ENCODE measurements at regions of chr16 and their contacts with region 1.

Region 1: GRCh38 chr16:56608043-56608875 is at the start of gene MT2A:
- DNase-seq: peak; percentile 97
- ATAC-seq: peak; percentile 66
- H3K4me3 Mint-ChIP-seq: peak within 1 kb of the TSS; percentile 97
- H3K27ac Mint-ChIP-seq: peak within 1 kb of the TSS; percentile 98
- H3K4me1 Mint-ChIP-seq: peaks cover 56% of the 10 kb centered on the region
- H3K27me3 Mint-ChIP-seq: no peaks in the 10 kb centered on the region
- total RNA-seq, gene MT2A: 114 to 380 TPM

Region 2: GRCh38 chr16:56203052-56203451 is 405.2 kb before region 1 on chr16:
- CTCF ChIA-PET with region 1: no interaction called
- POLR2A ChIA-PET with region 1: no interaction called
- intact Hi-C with region 1: loop called in 1 of 2 experiments (anchors 5 kb)
- DNase-seq: peak; percentile 82
- ATAC-seq: peak; percentile 85
- H3K4me3 Mint-ChIP-seq: no peak overlapping the region
- H3K27ac Mint-ChIP-seq: no peak overlapping the region
- H3K4me1 Mint-ChIP-seq: peaks cover 23% of the 10 kb centered on the region
- H3K27me3 Mint-ChIP-seq: peaks cover 3% of the 10 kb centered on the region

Region 3: GRCh38 chr16:56625140-56625942 is 17.1 kb after region 1 on chr16 and contains the start of gene MT1E:
- CTCF ChIA-PET with region 1: interaction called, 9 read pairs
- POLR2A ChIA-PET with region 1: interaction called, 31 read pairs
- intact Hi-C with region 1: loop called (anchors 1 kb)
- DNase-seq: peak; percentile 82
- ATAC-seq: peak; percentile 88
- H3K4me3 Mint-ChIP-seq: peak within 1 kb of the TSS; percentile 71
- H3K27ac Mint-ChIP-seq: peak within 1 kb of the TSS; percentile 79
- H3K4me1 Mint-ChIP-seq: peaks cover 14% of the 10 kb centered on the region
- H3K27me3 Mint-ChIP-seq: peaks cover 26% of the 10 kb centered on the region
- total RNA-seq, gene MT1E: 61.1 to 108 TPM

Region 4: GRCh38 chr16:56681939-56682702 is 73.9 kb after region 1 on chr16 and contains the start of gene MT1X:
- CTCF ChIA-PET with region 1: interaction called, 9 read pairs
- POLR2A ChIA-PET with region 1: interaction called, 7 read pairs
- intact Hi-C with region 1: loop called (anchors 1 kb)
- DNase-seq: peak; percentile 96
- ATAC-seq: peak; percentile 96
- H3K4me3 Mint-ChIP-seq: peak within 1 kb of the TSS; percentile 89
- H3K27ac Mint-ChIP-seq: peak within 1 kb of the TSS; percentile 97
- H3K4me1 Mint-ChIP-seq: peaks cover 22% of the 10 kb centered on the region
- H3K27me3 Mint-ChIP-seq: no peaks in the 10 kb centered on the region
- total RNA-seq, gene MT1X: 46.8 to 59.3 TPM

Region 5: GRCh38 chr16:56938422-56939156 is 330.3 kb after region 1 on chr16:
- CTCF ChIA-PET with region 1: no interaction called
- POLR2A ChIA-PET with region 1: no interaction called
- intact Hi-C with region 1: loop called (anchors 2 to 5 kb)
- DNase-seq: peak; percentile 78
- ATAC-seq: peak; percentile 81
- H3K4me3 Mint-ChIP-seq: peak overlapping the region; percentile 70
- H3K27ac Mint-ChIP-seq: peak overlapping the region; percentile 95
- H3K4me1 Mint-ChIP-seq: peaks cover 90% of the 10 kb centered on the region
- H3K27me3 Mint-ChIP-seq: no peaks in the 10 kb centered on the region

Region 6: DNA sequence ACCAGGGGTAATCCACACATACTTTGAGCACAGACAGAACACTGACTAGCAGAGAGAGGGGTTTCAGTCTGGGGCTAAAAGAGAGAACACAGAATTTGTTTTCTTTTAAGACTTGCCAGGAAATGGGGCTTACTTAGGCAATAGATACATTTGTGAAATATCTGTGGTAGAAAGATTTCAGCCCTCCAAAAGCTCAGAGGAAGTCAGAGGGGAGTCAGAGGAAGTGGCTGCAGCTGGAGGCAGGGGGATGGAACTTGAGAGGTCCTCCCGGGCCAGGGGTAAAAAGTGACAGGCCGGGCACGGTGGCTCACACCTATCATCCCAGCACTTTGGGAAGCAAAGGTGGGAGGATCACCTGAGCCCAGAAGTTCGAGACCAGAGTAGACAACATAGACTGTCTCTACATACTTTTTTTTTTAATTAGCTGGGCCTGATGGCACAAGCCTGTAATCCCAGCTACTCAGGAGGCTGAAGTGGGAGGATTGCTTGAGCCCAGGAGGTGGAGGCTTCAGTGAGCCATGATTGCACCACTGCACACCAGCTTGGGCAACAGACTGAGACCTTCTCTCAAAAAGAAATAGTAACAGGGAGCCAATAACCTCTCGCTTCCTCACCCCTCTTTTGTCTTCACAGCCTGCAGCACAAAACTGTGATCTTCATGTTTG is 431.0 kb after region 1 on chr16:
- CTCF ChIA-PET with region 1: no interaction called
- POLR2A ChIA-PET with region 1: no interaction called
- intact Hi-C with region 1: loop called in 1 of 2 experiments (anchors 1 kb)
- DNase-seq: peak; percentile 60
- ATAC-seq: peak; percentile 9
- H3K4me3 Mint-ChIP-seq: peak overlapping the region; percentile 2
- H3K27ac Mint-ChIP-seq: peak overlapping the region; percentile 97
- H3K4me1 Mint-ChIP-seq: peaks cover 89% of the 10 kb centered on the region
- H3K27me3 Mint-ChIP-seq: no peaks in the 10 kb centered on the region

Region 7: DNA sequence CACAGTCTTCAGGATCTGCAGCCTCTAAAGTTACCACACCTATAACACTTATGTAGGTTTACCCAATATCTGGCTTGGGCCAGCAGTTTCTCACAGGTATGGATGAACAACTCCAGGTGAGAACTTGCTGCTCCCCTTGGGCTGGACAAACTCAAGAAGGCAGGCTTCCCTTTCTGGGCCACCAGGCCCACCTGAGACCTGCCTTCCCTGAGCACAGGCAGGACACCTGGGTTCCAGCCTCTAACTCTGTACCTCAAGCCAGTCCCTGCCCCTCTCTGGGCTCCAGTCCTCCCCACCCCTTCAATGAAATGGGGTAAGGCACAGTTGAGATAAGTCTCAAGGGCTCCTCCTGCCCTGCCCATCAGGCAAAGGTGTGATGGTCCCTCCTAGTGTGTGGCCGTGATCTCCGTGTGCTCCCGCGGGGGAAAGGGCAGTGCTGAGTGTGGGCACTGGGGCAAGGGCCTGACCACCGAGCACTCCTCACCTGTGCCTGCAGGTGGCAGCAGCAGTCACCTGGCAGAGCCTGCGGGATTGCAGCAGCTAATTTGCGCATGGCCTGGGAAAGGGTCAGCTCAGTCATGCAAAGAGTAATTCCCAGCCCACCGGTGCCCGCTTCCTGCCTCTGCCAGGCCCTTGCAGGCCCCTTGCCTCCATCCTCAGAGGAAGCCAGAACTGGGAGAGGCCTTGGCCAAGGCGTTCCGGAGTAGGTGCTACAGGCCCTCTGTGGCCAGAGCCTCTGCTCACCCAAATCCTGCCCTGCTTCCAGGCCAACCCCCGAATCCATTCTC is 992.0 kb after region 1 on chr16:
- CTCF ChIA-PET with region 1: no interaction called
- POLR2A ChIA-PET with region 1: no interaction called
- intact Hi-C with region 1: loop called in 1 of 2 experiments (anchors 5 kb)
- DNase-seq: peak; percentile 73
- ATAC-seq: peak; percentile 18
- H3K4me3 Mint-ChIP-seq: no peak overlapping the region
- H3K27ac Mint-ChIP-seq: no peak overlapping the region
- H3K4me1 Mint-ChIP-seq: peaks cover 35% of the 10 kb centered on the region
- H3K27me3 Mint-ChIP-seq: no peaks in the 10 kb centered on the region